ENCODE measurements at regions of chr4 and their contacts with region 1.

Region 1: GRCh38 chr4:183398227-183399125 is 46.0 kb upstream of the CDKN2AIP start:
- DNase-seq: peak; percentile 88
- H3K4me3 Mint-ChIP-seq: peak overlapping the region; percentile 90
- H3K27ac Mint-ChIP-seq: peak overlapping the region; percentile 88
- H3K4me1 Mint-ChIP-seq: peaks cover 22% of the 10 kb centered on the region
- H3K27me3 Mint-ChIP-seq: peaks cover 33% of the 10 kb centered on the region

Region 2: GRCh38 chr4:182917182-182918043 is 481.1 kb before region 1 on chr4 and contains the start of gene DCTD:
- intact Hi-C with region 1: loop called (anchors 2 kb)
- DNase-seq: peak; percentile 95
- H3K4me3 Mint-ChIP-seq: peak within 1 kb of the TSS; percentile 87
- H3K27ac Mint-ChIP-seq: peak within 1 kb of the TSS; percentile 93
- H3K4me1 Mint-ChIP-seq: peaks cover 44% of the 10 kb centered on the region
- H3K27me3 Mint-ChIP-seq: peaks cover 5% of the 10 kb centered on the region
- total RNA-seq, gene DCTD: 125 and 129 TPM in 2 replicates

Region 3: GRCh38 chr4:183182873-183183725 is 215.4 kb before region 1 on chr4:
- intact Hi-C with region 1: loop called (anchors 10 kb)
- DNase-seq: peak; percentile 61
- H3K4me3 Mint-ChIP-seq: no peak overlapping the region
- H3K27ac Mint-ChIP-seq: no peak overlapping the region
- H3K4me1 Mint-ChIP-seq: peaks cover 8% of the 10 kb centered on the region
- H3K27me3 Mint-ChIP-seq: peaks cover 45% of the 10 kb centered on the region

Region 4: GRCh38 chr4:183438458-183439113 is 40.1 kb after region 1 on chr4:
- intact Hi-C with region 1: no loop called
- DNase-seq: no peak
- H3K4me3 Mint-ChIP-seq: no peak overlapping the region
- H3K27ac Mint-ChIP-seq: no peak overlapping the region
- H3K4me1 Mint-ChIP-seq: peaks cover 5% of the 10 kb centered on the region
- H3K27me3 Mint-ChIP-seq: peaks cover 4% of the 10 kb centered on the region

Measured in activated CD4-positive, alpha-beta T cell treated with anti-CD3 and anti-CD28 coated beads, Interleukin-2, amount 10 ng/mL, durations not matched to agents 24 days and 14 days (primary cell).